Common myeloid progenitor, CD34-positive (primary cell): ENCODE measurements at regions of chr19 and their contacts with region 1.

Region 1: DNA sequence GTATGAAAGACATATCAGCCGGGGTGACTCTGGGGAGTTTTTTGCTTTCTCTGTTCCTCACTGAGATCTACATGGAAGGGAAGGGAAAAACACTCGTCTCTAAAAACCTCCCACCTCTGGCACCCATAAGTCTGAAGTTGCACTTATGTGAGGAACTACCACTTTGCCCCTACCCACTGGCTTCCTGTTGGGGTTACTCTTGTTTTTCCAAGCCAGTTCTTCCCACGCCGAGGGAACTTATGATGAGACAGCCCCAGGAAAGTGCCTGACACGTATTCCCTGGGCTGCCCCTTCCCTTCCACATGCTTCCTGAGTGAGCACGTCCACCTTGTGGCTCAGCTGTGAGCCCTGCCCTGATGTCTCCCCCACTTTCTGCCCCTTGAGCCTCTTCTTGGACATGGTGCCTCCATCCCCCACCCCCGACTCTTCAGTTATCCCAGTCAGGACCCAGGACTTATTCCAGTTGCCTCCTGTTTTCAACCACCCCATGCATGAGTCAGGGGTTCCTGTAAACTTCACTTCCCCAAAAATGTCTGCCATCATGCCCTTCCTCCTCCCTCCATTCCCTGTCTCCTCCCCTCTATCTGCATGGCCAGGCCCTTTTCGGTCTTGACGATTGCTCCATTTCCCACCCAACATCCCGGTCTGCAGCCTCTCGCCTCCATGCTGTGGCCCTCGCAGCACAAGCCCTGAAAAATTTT is 5.1 kb upstream of the SIGLEC7 start:
- DNase-seq: peak; percentile 38 to 71 (median 68)
- H3K4me3 ChIP-seq: peak overlapping the region in 2 of 7 experiments; percentile 43 to 67
- H3K27ac ChIP-seq: no peak overlapping the region
- H3K4me1 ChIP-seq: peaks cover 18 to 67% (median 43%) of the 10 kb centered on the region in 4 experiments
- H3K27me3 ChIP-seq: peaks cover 0 to 15% (median 8%) of the 10 kb centered on the region in 5 experiments

Region 2: GRCh38 chr19:50952910-50953309 is 184.1 kb before region 1 on chr19 and contains the start of gene KLK5:
- CTCF ChIA-PET with region 1: no interaction called
- POLR2A ChIA-PET with region 1: no interaction called
- DNase-seq: no peak
- H3K4me3 ChIP-seq: no peak within 1 kb of the TSS
- H3K27ac ChIP-seq: no peak within 1 kb of the TSS
- H3K4me1 ChIP-seq: no peaks in the 10 kb centered on the region
- H3K27me3 ChIP-seq: peaks cover 0 to 47% (median 2%) of the 10 kb centered on the region in 5 experiments

Region 3: GRCh38 chr19:51111425-51112005 is 25.5 kb before region 1 on chr19:
- CTCF ChIA-PET with region 1: interaction called, 15 read pairs
- POLR2A ChIA-PET with region 1: no interaction called
- DNase-seq: no peak
- H3K4me3 ChIP-seq: no peak overlapping the region
- H3K27ac ChIP-seq: no peak overlapping the region
- H3K4me1 ChIP-seq: peaks cover 2 to 25% (median 15%) of the 10 kb centered on the region in 4 experiments
- H3K27me3 ChIP-seq: peaks cover 0 to 3% (median 0%) of the 10 kb centered on the region in 5 experiments